Activated CD8-positive, alpha-beta T cell treated with anti-CD3 and anti-CD28 coated beads, Interleukin-2, amount 10 ng/mL, durations not matched to agents 7 days and 5 days (primary cell): ENCODE measurements at regions of chr22 and their contacts with region 1.

Region 1: GRCh38 chr22:37676736-37677492 is 1.5 kb downstream of the LGALS1 start:
- DNase-seq: peak; percentile 95
- ATAC-seq: peak; percentile 69
- H3K4me3 Mint-ChIP-seq: peak overlapping the region; percentile 82
- H3K27ac Mint-ChIP-seq: peak overlapping the region; percentile 99
- H3K4me1 Mint-ChIP-seq: peaks cover 63% of the 10 kb centered on the region
- H3K27me3 Mint-ChIP-seq: no peaks in the 10 kb centered on the region

Region 2: DNA sequence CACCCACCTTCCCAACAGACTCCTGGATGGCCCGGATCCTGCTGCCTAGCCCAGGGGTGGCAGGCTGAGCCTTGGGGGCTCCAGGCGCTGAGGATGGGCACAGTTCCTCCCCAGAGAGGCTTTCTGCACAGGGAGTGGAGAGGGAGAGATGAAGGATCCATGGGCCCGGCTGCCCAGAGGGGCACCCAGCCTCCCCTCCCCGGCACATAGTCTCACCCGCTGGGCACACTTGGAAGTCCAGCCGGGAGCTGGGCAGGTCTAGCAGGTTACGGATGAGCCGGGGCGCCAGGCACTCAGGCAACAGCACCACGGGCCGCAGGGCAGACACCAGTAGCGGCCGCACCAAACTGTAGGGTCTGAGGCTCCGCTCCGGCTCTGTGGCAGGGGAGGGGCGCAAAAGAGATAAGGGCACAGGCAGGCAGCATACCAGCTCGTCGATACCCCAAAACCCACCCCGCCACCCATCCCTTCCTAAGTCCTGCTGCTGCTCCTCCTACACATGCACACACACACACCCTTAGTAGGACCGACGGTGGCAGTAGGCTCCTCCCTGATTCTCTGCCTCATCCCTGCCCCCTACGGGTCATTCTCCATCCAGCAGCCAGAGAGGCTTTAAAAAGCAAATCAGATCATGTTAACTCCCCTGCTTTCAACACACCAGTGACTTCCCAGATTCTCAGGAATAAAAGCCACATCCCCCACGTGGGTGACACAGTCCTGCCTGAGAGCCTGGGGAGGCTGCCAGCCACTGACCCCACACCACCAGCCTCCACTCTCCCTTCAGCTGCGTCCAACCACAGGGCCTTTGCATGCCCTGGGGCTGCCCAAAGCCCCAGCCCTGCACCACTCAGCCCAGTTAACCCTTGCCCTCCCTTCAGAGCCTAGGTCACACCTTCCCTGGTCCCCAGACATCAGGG is 184.2 kb before region 1 on chr22:
- CTCF ChIA-PET with region 1: no interaction called
- POLR2A ChIA-PET with region 1: no interaction called
- DNase-seq: peak; percentile 76
- ATAC-seq: peak; percentile 77
- H3K4me3 Mint-ChIP-seq: no peak overlapping the region
- H3K27ac Mint-ChIP-seq: peak overlapping the region; percentile 55
- H3K4me1 Mint-ChIP-seq: peaks cover 43% of the 10 kb centered on the region
- H3K27me3 Mint-ChIP-seq: peaks cover under 1% of the 10 kb centered on the region

Region 3: GRCh38 chr22:37588546-37589215 is 88.2 kb before region 1 on chr22:
- CTCF ChIA-PET with region 1: interaction called, 14 read pairs
- POLR2A ChIA-PET with region 1: no interaction called
- DNase-seq: no peak
- ATAC-seq: no peak
- H3K4me3 Mint-ChIP-seq: no peak overlapping the region
- H3K27ac Mint-ChIP-seq: no peak overlapping the region
- H3K4me1 Mint-ChIP-seq: peaks cover 11% of the 10 kb centered on the region
- H3K27me3 Mint-ChIP-seq: peaks cover 12% of the 10 kb centered on the region

Region 4: DNA sequence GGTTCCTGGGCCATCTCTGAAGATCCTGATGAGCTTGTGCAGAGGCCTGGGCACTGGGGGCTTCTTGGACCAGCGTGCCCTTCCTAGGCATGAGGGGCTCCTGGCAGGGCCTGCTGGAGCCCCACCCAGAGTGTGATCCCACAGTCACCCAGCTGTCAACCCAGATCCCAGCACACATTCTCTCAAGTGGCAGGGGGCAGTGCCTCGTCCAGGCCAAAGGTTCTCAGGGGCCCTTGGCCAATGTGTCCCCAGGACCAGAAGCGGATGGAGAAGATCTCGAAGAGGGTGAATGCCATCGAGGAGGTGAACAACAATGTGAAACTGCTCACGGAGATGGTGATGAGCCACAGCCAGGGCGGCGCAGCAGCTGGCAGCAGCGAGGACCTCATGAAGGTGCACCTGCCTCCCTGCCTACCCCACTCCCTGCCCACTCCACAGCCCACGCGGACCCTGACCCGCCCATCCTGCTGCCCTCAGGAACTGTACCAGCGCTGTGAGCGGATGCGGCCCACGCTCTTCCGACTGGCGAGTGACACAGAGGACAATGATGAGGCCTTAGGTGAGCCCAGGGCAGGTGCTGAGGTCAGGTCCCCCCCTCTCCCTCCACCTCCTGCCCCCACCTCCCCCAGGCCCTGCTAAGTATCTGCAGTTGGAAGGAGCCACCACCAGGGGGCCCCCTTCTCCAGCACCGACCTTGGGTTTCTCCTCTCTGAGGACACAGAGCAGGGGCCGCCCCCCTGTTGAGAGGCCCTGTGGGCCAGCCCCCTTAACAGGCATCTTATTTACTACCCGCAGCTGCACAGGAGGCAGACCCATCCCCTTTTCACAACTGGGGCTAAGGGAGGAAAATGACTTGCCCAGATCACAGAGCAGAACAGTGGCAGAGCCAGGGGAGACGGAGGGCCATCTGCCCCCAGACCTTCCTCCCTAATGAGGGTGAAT is 53.6 kb before region 1 on chr22:
- CTCF ChIA-PET with region 1: interaction called, 39 read pairs
- POLR2A ChIA-PET with region 1: interaction called, 12 read pairs
- DNase-seq: peak; percentile 85
- ATAC-seq: peak; percentile 66
- H3K4me3 Mint-ChIP-seq: no peak overlapping the region
- H3K27ac Mint-ChIP-seq: peak overlapping the region; percentile 89
- H3K4me1 Mint-ChIP-seq: peaks cover 52% of the 10 kb centered on the region
- H3K27me3 Mint-ChIP-seq: no peaks in the 10 kb centered on the region

Region 5: GRCh38 chr22:37633625-37634416 is 43.1 kb before region 1 on chr22:
- CTCF ChIA-PET with region 1: interaction called, 39 read pairs
- POLR2A ChIA-PET with region 1: interaction called, 8 read pairs
- DNase-seq: peak; percentile 81
- ATAC-seq: peak; percentile 53
- H3K4me3 Mint-ChIP-seq: peak overlapping the region; percentile 72
- H3K27ac Mint-ChIP-seq: peak overlapping the region; percentile 97
- H3K4me1 Mint-ChIP-seq: peaks cover 85% of the 10 kb centered on the region
- H3K27me3 Mint-ChIP-seq: no peaks in the 10 kb centered on the region

Region 6: DNA sequence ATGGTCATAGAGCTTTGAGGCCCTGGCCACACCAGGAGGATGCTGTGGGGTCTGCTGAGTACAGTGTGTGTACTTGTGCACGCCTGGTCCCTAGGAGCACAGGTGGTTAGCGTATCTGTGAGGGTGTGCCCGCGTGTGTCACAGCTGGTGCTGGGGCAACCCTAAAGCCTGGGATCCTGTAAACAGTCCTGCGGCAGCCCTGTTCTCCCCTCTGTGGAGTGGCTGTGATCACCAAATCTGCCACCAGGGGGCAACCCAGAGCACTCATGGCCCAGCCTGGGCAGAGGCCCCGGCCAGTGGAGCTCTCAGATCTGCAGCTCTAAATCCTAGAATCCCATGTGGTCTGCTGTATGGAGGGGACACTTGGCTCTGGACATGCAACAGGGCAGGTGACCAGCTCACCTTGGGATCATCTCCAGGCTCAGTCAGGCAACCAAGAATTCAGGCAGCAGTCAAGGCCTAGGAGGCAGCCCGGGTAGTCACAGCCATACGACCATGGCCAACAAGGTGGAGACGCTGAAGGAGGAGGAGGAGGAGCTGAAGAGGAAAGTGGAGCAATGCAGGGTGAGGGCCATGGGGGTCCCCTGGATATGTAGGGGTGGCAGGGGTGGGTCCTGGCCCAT is 33.6 kb before region 1 on chr22:
- CTCF ChIA-PET with region 1: interaction called, 183 read pairs
- POLR2A ChIA-PET with region 1: interaction called, 11 read pairs
- DNase-seq: peak; percentile 91
- ATAC-seq: peak; percentile 61
- H3K4me3 Mint-ChIP-seq: peak overlapping the region; percentile 63
- H3K27ac Mint-ChIP-seq: peak overlapping the region; percentile 72
- H3K4me1 Mint-ChIP-seq: peaks cover 47% of the 10 kb centered on the region
- H3K27me3 Mint-ChIP-seq: no peaks in the 10 kb centered on the region

Region 7: GRCh38 chr22:37658133-37659065 is 18.5 kb before region 1 on chr22 and contains the start of gene PDXP:
- CTCF ChIA-PET with region 1: interaction called, 241 read pairs
- POLR2A ChIA-PET with region 1: interaction called, 33 read pairs
- DNase-seq: peak; percentile 99
- ATAC-seq: peak; percentile 98
- H3K4me3 Mint-ChIP-seq: peak within 1 kb of the TSS; percentile 87
- H3K27ac Mint-ChIP-seq: peak within 1 kb of the TSS; percentile 87
- H3K4me1 Mint-ChIP-seq: peaks cover 37% of the 10 kb centered on the region
- H3K27me3 Mint-ChIP-seq: no peaks in the 10 kb centered on the region
- total RNA-seq, gene PDXP: 31.5 to 33.5 TPM

Region 8: DNA sequence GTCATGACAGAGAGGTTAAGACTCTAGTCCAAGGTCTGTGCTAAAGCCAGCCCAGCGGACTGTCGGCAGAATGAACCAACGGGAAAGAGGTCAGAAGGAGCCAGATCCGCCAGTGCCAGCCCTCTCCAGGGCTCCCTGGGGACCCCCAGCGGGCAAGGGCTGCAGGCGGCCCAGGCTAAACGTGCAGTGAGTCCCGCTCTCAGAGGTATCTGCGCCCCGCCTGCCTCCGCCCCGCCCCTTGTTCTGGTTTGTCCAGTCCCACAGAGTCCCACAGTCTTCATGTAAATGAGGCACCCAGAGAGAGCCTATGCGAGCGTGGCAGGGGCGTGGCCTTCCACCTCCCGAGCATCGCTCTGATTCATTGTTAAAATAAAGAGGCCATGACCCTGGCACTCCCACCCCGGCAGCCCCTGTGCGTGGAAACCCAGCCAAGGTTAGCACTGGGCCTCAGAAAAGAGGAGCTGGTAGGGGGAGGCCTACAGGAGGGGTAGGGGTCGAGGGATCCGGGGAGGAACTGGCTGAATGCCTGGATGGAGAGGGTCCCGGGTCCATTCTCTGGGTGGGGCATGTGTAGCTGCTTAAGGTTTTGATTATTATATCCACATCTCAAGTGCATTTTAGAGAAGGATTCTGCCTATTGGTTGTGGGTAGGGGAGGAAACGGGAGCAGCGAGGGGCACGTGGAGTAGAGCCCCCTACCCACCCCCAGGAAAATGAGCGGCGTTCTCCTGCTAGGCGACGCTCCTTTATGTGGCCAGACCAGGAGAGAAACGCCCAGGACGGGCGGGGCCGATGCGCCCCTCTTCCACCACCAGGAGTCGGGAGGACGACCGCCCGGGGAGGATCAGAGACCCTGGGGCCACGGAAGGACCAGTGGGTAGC is 20.0 kb after region 1 on chr22 and contains the start of gene TRIOBP:
- CTCF ChIA-PET with region 1: interaction called, 11 read pairs
- POLR2A ChIA-PET with region 1: no interaction called
- DNase-seq: peak; percentile 93
- ATAC-seq: peak; percentile 100
- H3K4me3 Mint-ChIP-seq: peak within 1 kb of the TSS; percentile 52
- H3K27ac Mint-ChIP-seq: peak within 1 kb of the TSS; percentile 10
- H3K4me1 Mint-ChIP-seq: peaks cover 27% of the 10 kb centered on the region
- H3K27me3 Mint-ChIP-seq: no peaks in the 10 kb centered on the region
- total RNA-seq, gene TRIOBP: 45.2 to 45.8 TPM

Region 9: GRCh38 chr22:37777122-37777687 is 100.3 kb after region 1 on chr22:
- CTCF ChIA-PET with region 1: no interaction called
- POLR2A ChIA-PET with region 1: no interaction called
- DNase-seq: no peak
- ATAC-seq: no peak
- H3K4me3 Mint-ChIP-seq: no peak overlapping the region
- H3K27ac Mint-ChIP-seq: no peak overlapping the region
- H3K4me1 Mint-ChIP-seq: no peaks in the 10 kb centered on the region
- H3K27me3 Mint-ChIP-seq: no peaks in the 10 kb centered on the region